Ascending aorta (tissue), 2 donors: ENCODE measurements at regions of chr14 and their contacts with region 1.

Region 1: GRCh38 chr14:59320763-59321640 is 132.5 kb downstream of the DAAM1 start:
- DNase-seq: no peak
- H3K4me3 ChIP-seq: peak overlapping the region in 1 of 2 donors; percentile 13
- H3K27ac ChIP-seq: peak overlapping the region; percentile 72 to 78
- H3K4me1 ChIP-seq: peaks cover 11 to 58% of the 10 kb centered on the region in 2 donors
- H3K27me3 ChIP-seq: no peaks in the 10 kb centered on the region
- CTCF ChIP-seq: no peak

Region 2: GRCh38 chr14:58978343-58978742 is 342.7 kb before region 1 on chr14:
- intact Hi-C with region 1: no loop called
- DNase-seq: no peak
- H3K4me3 ChIP-seq: no peak overlapping the region
- H3K27ac ChIP-seq: no peak overlapping the region
- H3K4me1 ChIP-seq: no peaks in the 10 kb centered on the region
- H3K27me3 ChIP-seq: no peaks in the 10 kb centered on the region
- CTCF ChIP-seq: no peak

Region 3: DNA sequence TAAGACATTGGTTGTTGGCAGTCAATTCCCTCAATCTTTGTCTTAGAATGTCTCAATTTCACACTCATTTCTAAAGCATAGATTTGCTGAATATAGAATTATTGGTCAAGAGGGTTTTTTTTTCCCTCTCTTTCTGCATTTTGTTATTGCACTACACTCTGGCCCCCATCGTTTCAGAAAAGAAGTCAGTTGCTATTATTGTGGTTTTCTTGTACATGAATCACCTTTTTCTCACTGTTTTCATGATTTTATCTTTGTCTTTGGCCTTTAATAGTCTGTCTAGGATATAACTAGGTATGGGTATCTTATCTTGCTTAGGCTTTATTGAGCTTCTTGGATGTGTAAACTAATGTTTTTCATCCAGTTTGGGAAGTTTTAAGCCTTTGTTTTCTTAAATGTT is 326.9 kb before region 1 on chr14:
- intact Hi-C with region 1: no loop called
- DNase-seq: no peak
- H3K4me3 ChIP-seq: no peak overlapping the region
- H3K27ac ChIP-seq: no peak overlapping the region
- H3K4me1 ChIP-seq: no peaks in the 10 kb centered on the region
- H3K27me3 ChIP-seq: no peaks in the 10 kb centered on the region
- CTCF ChIP-seq: no peak

Region 4: GRCh38 chr14:59294662-59294992 is 26.4 kb before region 1 on chr14:
- intact Hi-C with region 1: no loop called
- DNase-seq: no peak
- H3K4me3 ChIP-seq: no peak overlapping the region
- H3K27ac ChIP-seq: peak overlapping the region; percentile 75 to 76
- H3K4me1 ChIP-seq: peaks cover 7 to 25% of the 10 kb centered on the region in 2 donors
- H3K27me3 ChIP-seq: no peaks in the 10 kb centered on the region
- CTCF ChIP-seq: no peak

Region 5: GRCh38 chr14:59333668-59334067 is 12.7 kb after region 1 on chr14:
- intact Hi-C with region 1: loop called (anchors 1 kb)
- DNase-seq: no peak
- H3K4me3 ChIP-seq: no peak overlapping the region
- H3K27ac ChIP-seq: peak overlapping the region; percentile 71 to 83
- H3K4me1 ChIP-seq: peaks cover 0 to 45% of the 10 kb centered on the region in 2 donors
- H3K27me3 ChIP-seq: no peaks in the 10 kb centered on the region
- CTCF ChIP-seq: no peak